H1 (cell line): ENCODE measurements at regions of chr17 and their contacts with region 1.

Region 1: DNA sequence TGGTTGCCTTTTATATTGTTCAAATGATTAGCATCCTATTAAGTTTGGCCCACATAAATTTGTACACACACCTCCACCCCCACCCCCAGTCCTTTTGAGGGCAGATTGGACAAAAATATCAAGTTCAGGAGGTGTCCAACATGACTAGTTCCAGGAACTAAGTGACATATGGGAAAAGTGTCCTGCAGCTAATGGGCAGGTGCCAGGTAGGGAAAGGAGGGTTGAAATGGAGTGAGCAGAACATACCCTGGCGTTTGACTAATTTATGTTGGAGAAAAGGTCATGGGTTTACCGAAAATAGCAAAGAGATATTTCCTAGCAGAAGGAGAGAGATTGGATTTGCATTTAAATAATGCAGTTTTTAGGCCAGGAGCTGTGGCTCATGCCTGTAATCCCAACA is 4.9 kb downstream of the KCTD2 start:
- DNase-seq: no peak
- H3K4me3 ChIP-seq: no peak overlapping the region
- H3K27ac ChIP-seq: no peak overlapping the region
- H3K4me1 ChIP-seq: peaks cover 0 to 6% (median 1%) of the 10 kb centered on the region in 4 experiments; a peak in 3 of 7 replicates
- H3K27me3 ChIP-seq: no peaks in the 10 kb centered on the region
- CTCF ChIP-seq: no peak
- EP300 ChIP-seq: no peak
- POLR2A ChIP-seq: no peak
- RAD21 ChIP-seq: no peak

Region 2: DNA sequence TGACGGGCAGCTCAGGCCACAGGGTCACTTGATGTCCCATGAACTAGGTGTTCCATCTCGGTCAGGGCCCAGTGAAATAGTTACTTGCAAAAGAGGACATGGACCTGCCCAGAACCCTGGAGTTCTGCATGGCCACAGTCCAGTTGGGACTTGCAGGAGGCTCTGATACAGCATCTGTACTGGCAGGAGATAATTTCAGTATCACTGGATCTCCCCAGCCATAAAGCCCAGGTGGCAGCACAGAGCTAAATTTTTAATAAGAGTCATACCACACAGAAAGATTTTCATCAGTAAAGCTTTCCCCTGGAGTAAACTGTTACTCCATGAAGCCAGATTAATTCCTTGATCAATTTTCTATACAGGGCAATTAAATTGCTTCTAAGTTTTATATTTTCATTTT is 17.8 kb after region 1 on chr17:
- CTCF ChIA-PET with region 1: interaction called, 19 read pairs
- POLR2A ChIA-PET with region 1: interaction called, 6 read pairs
- DNase-seq: no peak
- H3K4me3 ChIP-seq: no peak overlapping the region
- H3K27ac ChIP-seq: no peak overlapping the region
- H3K4me1 ChIP-seq: no peaks in the 10 kb centered on the region; a peak in 1 of 7 replicates
- H3K27me3 ChIP-seq: no peaks in the 10 kb centered on the region
- CTCF ChIP-seq: peak in 2 of 3 experiments; percentile 6 to 7; a peak in 2 of 4 replicates
- EP300 ChIP-seq: no peak
- POLR2A ChIP-seq: no peak
- RAD21 ChIP-seq: no peak